Pancreas (tissue), 10 donors: ENCODE measurements at regions of chr1 and their contacts with region 1.

Region 1: DNA sequence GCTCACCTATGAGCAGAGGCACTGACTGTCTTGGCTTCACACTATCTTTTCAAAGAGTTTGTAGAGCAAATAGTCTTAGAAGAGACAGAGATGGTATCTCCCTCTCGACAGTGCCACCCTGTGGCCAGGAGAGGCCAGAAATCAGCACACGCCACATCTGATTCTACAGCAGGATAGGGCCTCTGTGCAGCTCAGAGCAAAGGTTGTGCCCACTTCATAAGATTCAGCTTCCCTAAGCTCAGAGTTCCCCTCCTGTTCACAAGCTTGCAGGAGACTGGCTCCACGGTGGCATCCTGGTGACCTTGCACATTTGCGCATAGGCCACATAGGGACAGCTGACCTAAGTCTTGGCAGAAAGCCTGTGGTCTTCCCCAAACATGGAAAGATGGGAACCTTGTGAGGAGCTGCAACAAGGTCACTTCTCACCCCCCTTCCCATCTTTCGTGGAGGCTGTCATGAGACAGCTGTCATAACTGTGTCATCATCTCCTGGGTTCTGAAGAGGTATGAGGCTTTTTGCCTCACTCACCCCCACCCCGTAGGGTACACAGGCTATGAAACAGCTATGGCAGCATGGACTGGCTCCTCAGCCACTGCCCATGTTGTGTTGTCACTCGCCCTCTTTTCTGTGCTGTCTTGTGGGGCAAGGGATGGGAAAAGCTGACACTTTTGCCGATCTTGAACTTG is 3.0 kb downstream of the ITLN2 start:
- DNase-seq: peak in 5 of 6 donors; percentile 30 to 74 (median 54)
- ATAC-seq: peak; percentile 76 to 95 (median 92)
- H3K4me3 ChIP-seq: no peak overlapping the region
- H3K27ac ChIP-seq: no peak overlapping the region
- H3K4me1 ChIP-seq: no peaks in the 10 kb centered on the region
- H3K27me3 ChIP-seq: no peaks in the 10 kb centered on the region
- CTCF ChIP-seq: peak; percentile 40 to 67 (median 54)

Region 2: DNA sequence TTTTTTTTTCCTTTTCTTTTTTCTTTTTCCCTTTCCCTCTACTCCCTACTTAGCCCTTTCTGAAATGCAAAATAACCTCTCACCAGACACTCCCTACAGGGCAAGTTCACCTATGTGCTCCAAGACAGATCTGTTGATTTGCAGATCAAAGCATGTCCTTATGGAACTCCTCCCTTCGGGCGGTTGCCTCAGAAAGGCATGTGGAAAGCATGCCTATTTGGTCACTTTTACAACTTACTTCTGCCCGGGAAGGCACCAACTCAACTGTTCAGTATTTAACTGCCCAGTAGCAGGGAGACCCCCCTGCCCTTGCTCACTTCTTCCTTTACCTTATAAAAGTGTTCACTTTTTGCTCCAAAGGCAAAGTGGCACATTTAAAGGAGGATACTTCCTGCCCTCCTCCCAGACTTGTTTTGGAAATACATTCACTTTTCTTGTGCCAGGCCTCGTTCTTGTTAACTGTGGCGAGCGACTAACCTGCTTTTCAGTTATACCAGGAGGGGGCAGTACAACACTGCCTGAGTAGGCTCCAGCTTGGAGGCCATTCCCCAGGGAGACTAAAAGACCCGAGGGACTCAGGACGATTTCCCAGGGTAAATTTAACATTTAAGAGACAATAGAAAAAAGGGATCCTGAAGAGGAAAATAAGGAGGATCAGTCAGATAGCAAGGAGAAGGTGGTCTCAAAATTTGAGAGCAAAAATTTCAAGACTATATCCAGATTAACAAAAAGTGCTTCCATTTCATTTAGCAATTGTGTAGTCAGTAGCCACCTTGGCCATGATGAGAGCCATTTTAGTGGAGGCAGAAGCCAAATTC is 224.9 kb before region 1 on chr1:
- intact Hi-C with region 1: loop called in 1 of 3 experiments (anchors 10 kb)
- DNase-seq: peak in 4 of 6 donors; percentile 20 to 60 (median 42)
- ATAC-seq: peak; percentile 76 to 99 (median 96)
- H3K4me3 ChIP-seq: no peak overlapping the region
- H3K27ac ChIP-seq: no peak overlapping the region
- H3K4me1 ChIP-seq: no peaks in the 10 kb centered on the region
- H3K27me3 ChIP-seq: no peaks in the 10 kb centered on the region
- CTCF ChIP-seq: peak; percentile 76 to 88 (median 80)